AG04449 (cell line): ENCODE measurements at regions of chr15 and their contacts with region 1.

Region 1: DNA sequence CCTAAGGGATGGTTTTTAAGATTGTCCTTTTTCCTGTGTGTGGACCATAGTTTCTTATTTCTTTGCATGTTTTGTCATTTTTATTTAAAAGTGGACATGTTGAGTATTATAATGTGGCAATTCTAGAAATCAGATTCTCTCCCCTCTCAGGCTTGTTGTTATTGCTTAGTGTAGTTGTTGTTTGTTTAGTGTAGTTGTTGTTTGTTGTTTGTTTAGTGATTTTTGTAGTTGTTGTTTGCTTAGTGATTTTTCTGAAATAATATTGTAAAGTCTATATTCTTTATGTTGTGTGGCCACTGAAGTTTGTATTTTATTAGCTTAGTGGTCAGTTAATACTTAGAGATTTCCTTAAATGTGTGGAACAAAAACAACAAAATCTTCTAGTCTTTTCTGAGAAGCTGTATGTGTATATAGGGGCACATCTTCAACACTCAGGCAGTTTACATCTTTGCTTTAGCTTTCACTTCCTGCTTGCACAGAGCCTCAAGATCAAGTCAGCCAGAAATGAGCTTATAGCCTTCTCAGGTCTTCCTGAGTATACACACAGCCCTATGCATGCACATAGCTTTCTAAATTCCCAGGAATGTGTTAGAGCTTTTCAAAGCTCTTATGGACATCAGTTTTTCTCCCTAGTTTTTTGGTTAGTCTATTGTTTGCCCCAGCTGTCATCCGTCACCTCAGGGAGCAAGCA is 22.3 kb upstream of the MTMR10 start:
- DNase-seq: no peak
- H3K4me3 ChIP-seq: no peak overlapping the region
- CTCF ChIP-seq: no peak

Region 2: GRCh38 chr15:31001707-31002106 is 12.0 kb before region 1 on chr15:
- CTCF ChIA-PET with region 1: interaction called, 14 read pairs
- POLR2A ChIA-PET with region 1: no interaction called
- DNase-seq: no peak
- H3K4me3 ChIP-seq: peak overlapping the region; percentile 13
- CTCF ChIP-seq: no peak